Dorsolateral prefrontal cortex (tissue), 120 donors: ENCODE measurements at regions of chr5 and their contacts with region 1.

Region 1: DNA sequence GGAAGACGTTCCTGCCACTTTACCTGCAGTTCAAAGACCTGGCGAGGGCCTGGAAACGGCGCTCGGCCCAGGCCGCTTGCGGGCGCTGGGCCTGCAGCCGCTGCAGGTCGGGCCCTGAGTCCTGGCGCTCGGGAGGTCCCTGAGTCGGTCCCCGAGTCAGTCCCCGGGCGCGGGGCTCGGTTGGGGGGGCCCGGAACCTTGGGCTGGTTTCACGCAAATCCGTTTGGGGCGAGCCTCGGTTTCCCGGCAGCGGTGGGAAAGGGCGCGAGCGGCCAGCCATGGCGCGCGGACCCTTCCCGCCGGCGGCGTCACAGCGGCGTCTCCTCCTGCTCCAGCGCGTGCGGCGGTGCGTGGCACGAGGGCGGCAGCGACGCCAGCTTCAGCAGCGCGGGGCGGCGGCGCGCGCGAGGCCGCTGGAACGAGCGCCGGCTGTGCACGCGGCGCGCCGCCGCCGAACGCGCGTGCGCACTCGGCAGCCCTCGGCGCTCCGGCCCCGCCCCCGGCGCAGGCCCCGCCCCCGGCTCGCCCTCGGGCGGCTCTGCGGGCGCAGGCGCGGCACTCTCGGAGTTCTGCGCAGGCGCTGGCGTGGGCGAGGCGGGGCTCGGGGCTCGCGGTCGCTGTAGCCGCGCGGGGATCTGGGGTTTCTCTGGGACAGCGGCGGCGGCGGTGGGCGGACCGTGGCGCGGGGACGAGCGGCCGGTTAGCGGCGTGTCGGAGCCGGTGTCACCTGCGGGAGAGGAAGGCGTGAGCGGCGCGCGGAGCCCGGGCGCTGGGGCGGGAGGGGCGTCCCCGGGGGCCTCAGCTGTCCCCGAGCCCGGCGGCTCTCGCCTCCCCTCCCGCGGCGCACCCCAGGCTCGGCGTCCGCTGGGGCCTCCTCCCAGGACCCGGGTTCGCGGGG is 29.9 kb downstream of the EXOC3 start:
- DNase-seq: peak; percentile 66 to 94 (median 80)
- H3K4me3 ChIP-seq: peak overlapping the region; percentile 76 to 99 (median 89)
- H3K27ac ChIP-seq: peak overlapping the region in 55 of 59 donors; percentile 18 to 93 (median 79)
- H3K27me3 ChIP-seq: peaks cover 0 to 32% (median 0%) of the 10 kb centered on the region in 45 donors
- CTCF ChIP-seq: peak in 1 of 56 donors; percentile 6

Region 2: GRCh38 chr5:448061-448765 is 24.7 kb before region 1 on chr5:
- intact Hi-C with region 1: loop called in 1 of 2 experiments (anchors 2 kb)
- DNase-seq: peak in 6 of 10 donors; percentile 45 to 73 (median 59)
- H3K4me3 ChIP-seq: peak overlapping the region in 2 of 59 donors; percentile 12 to 14
- H3K27ac ChIP-seq: peak overlapping the region in 37 of 59 donors; percentile 6 to 75 (median 43)
- H3K27me3 ChIP-seq: no peaks in the 10 kb centered on the region
- CTCF ChIP-seq: no peak

Region 3: DNA sequence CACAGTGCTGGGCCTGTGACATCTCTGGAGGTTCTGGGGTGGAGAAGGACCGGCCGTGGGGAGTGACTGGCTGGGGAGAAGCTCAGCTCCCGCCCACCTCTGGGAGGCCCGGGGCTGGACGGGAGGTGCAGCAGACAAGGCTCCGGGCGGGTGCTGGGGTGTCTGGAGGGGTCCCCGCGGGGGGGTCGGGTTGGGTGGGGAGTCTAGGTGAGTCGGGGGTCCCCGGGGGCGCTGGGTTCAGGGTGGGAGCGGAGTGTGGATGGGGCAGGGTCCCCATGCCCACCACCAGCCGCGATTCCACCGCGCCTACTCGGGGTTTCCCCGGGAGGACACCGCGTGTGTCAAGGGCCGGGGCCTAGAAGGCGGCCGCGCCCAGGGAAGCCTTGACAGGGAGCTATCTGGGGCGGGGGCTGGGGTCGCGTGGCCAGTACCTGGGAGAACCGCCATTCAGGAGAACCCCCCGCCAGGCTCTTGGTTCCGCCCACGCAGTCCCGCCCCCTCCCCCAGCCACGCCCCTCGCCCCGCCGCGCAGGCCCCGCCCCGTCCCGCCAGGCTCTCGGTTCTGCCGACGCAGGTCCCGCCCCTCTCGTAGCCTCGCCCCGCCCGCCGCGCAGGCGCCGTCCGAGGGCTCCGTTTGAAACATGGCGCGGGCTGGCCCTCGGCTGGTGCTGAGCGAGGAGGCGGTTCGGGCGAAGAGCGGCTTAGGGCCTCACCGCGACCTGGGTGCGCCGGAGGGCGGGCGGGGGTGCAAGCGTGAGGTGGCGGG is 139.0 kb after region 1 on chr5 and contains the start of gene CEP72:
- intact Hi-C with region 1: loop called (anchors 5 to 10 kb)
- DNase-seq: peak; percentile 84 to 96 (median 88)
- H3K4me3 ChIP-seq: peak within 1 kb of the TSS; percentile 65 to 98 (median 88)
- H3K27ac ChIP-seq: peak within 1 kb of the TSS in 5 of 59 donors; percentile 36 to 79 (median 59)
- H3K27me3 ChIP-seq: peaks cover 0 to 2% (median 0%) of the 10 kb centered on the region in 45 donors
- CTCF ChIP-seq: peak in 2 of 56 donors; percentile 12 to 33
- total RNA-seq, gene CEP72: 4.0 to 11.0 (median 7.0) TPM

Region 4: GRCh38 chr5:671459-672328 is 198.8 kb after region 1 on chr5:
- intact Hi-C with region 1: loop called in 1 of 2 experiments (anchors 10 kb)
- DNase-seq: peak; percentile 76 to 87 (median 84)
- H3K4me3 ChIP-seq: peak overlapping the region in 44 of 59 donors; percentile 1 to 57 (median 32)
- H3K27ac ChIP-seq: peak overlapping the region; percentile 83 to 100 (median 99)
- H3K27me3 ChIP-seq: peaks cover 0 to 6% (median 0%) of the 10 kb centered on the region in 45 donors
- CTCF ChIP-seq: peak; percentile 64 to 95 (median 86)

Region 5: DNA sequence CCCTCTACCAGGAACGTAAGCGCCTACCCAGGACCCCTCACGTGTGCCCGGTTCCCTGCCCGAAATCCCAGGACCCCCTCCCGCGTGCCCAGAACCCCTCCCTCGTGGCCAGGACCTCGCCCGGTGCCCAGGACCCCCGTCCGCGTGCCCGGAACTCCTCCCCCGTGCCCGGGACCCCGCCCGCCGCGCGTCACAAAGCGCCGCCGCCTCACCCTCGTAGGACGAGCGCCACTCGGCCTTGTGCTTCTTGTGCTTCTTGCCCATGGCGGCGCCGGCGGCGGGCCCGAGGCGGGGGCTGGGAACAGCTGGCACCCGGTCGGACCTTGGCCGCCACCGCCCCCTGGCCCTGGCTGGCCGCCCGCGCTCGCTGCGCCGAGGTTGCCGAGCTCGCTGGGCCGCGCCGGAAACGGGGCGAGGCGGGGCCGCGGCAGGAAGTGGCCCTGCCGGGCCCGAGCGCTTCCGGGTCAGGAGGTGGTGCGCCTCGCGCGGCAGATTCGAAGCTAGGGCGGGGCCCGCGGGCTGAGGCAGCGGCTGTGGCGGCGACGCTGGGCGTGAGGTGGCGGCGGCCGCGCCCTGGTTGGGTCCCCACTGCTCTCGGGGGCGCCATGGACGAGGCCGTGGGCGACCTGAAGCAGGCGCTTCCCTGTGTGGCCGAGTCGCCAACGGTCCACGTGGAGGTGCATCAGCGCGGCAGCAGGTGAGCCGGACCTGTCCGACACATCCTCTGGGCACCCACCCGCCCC is 419.7 kb after region 1 on chr5 and contains the starts of genes BRD9 and TRIP13:
- intact Hi-C with region 1: loop called (anchors 5 to 10 kb)
- DNase-seq: peak; percentile 40 to 94 (median 80)
- H3K4me3 ChIP-seq: peak within 1 kb of the TSS; percentile 68 to 98 (median 89)
- H3K27ac ChIP-seq: peak within 1 kb of the TSS in 54 of 59 donors; percentile 25 to 88 (median 80)
- H3K27me3 ChIP-seq: no peaks in the 10 kb centered on the region
- CTCF ChIP-seq: peak in 27 of 56 donors; percentile 12 to 67 (median 42)
- total RNA-seq, gene BRD9: 53.0 to 164 (median 82.5) TPM
- total RNA-seq, gene TRIP13: 0.40 to 4.4 (median 1.5) TPM

Region 6: GRCh38 chr5:1344975-1345838 is 872.3 kb after region 1 on chr5 and contains the start of gene CLPTM1L:
- intact Hi-C with region 1: loop called in 1 of 2 experiments (anchors 10 kb)
- DNase-seq: peak; percentile 57 to 92 (median 70)
- H3K4me3 ChIP-seq: peak within 1 kb of the TSS; percentile 62 to 100 (median 96)
- H3K27ac ChIP-seq: peak within 1 kb of the TSS in 57 of 59 donors; percentile 24 to 94 (median 85)
- H3K27me3 ChIP-seq: no peaks in the 10 kb centered on the region
- CTCF ChIP-seq: peak in 23 of 56 donors; percentile 7 to 60 (median 22)
- total RNA-seq, gene CLPTM1L: 43.0 to 76.3 (median 58.2) TPM